GM12878 (cell line): ENCODE measurements at regions of chr17 and their contacts with region 1.

Region 1: DNA sequence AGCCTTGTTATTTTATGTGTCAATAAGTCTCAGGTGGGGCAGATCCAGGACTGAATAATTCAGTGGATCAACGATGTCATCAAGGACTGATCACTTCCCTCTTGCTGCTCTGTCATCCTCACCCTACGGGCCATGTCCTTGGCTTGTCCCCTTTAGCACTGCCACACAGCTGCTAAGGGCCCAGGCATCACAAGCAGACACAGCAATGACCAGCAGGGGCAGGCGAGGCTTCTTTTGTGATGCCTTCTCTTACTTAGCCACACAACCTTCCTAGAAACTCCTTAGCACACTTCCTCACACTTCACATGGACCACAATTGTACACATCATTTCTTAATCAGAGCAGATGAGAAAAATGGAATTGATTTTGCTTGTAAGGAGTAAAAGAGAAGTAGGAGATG is 356.3 kb upstream of the SOX9 start:
- DNase-seq: no peak
- ATAC-seq: peak; percentile 98
- H3K4me3 ChIP-seq: no peak overlapping the region
- H3K27ac ChIP-seq: no peak overlapping the region
- H3K4me1 ChIP-seq: no peaks in the 10 kb centered on the region
- H3K27me3 ChIP-seq: no peaks in the 10 kb centered on the region
- CTCF ChIP-seq: peak; percentile 58 to 62 (median 58)
- EP300 ChIP-seq: no peak
- POLR2A ChIP-seq: no peak
- RAD21 ChIP-seq: peak; percentile 59

Region 2: DNA sequence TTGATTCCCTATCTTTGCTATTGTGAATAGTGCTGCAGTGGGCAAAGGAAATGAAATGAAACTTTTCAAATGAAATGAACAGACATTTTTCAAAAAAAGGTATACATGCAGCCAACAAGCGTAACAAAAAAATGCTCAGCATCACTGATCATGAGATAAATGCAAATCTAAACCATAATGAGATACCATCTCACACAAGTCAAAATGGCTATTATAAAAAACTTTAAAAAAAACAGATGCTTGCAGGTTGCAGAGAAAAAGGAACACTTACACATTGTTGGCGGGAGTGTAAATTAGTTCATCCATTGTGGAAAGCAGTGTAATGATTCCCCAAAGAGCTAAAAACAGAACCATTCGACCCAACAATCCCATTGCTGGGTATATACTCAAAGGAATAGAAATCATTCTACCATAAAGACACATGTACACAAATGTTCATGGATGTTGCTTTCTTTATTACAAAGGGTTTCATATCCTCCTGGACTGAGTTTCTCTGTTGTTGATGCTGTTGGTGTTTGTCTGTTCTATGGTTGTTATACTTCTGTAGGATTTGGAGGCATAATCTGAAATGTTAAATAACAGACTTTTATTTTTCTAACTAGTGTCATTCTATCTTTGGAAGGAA is 257.0 kb after region 1 on chr17:
- CTCF ChIA-PET with region 1: no interaction called
- POLR2A ChIA-PET with region 1: no interaction called
- RAD21 ChIA-PET with region 1: no interaction called
- SMC1A ChIA-PET with region 1: no interaction called
- in situ Hi-C with region 1: no loop called
- intact Hi-C with region 1: loop called (anchors 10 kb)
- DNase-seq: no peak
- ATAC-seq: peak; percentile 86
- H3K4me3 ChIP-seq: no peak overlapping the region
- H3K27ac ChIP-seq: peak overlapping the region; percentile 85
- H3K4me1 ChIP-seq: peaks cover 42% of the 10 kb centered on the region
- H3K27me3 ChIP-seq: no peaks in the 10 kb centered on the region
- CTCF ChIP-seq: no peak
- EP300 ChIP-seq: no peak
- POLR2A ChIP-seq: no peak
- RAD21 ChIP-seq: 0 out of 2 replicates have a peak, but pooled peaks have one; percentile 1